Naive thymus-derived CD4-positive, alpha-beta T cell (primary cell): ENCODE measurements at regions of chr18 and their contacts with region 1.

Region 1: DNA sequence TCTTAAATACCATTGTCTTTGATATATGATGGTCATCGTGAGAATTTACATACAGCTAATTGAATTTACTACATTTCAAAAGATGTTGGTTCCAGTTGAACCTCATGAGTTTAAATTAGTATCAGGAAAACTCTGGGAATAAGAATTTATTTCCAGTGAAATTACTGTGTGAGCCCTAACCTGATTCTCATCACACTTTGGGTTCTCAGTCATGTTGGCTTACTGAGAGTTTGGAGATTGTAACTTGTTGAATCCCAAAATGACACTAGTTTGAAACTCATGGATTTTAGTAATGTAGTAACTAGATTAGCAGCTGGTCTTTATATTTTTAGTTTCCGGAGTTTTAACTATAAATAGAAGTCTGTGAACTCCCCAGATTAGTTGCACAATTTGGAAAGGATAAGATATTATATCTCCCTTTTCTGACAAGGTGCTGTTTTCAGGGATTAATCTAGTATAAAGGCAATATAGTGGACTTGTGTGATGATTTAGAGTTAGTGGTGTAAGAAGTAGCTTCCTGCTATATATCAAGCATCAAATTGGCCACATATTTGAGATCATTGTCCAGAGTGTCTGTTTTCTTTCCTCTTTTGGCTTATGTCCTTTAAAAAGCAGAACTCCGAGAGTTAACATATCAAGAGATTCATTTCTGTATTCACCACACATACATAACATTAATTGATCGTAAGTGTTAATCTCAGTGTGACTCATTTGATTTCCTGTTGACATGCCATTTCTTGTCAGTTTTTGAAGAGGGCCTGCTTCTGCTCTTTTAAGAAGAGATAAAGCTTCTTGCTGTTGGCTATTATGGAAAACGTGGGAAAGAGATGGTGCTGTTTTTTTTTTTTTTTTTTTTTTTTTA is 15.7 kb downstream of the NDUFV2 start:
- DNase-seq: peak in 7 of 9 donors; percentile 28 to 66 (median 43)
- ATAC-seq: peak; percentile 72
- H3K4me3 ChIP-seq: peak overlapping the region; percentile 32
- H3K4me3 Mint-ChIP-seq: peak overlapping the region; percentile 56 to 97 (median 82)
- H3K27ac ChIP-seq: peak overlapping the region; percentile 77
- H3K27ac Mint-ChIP-seq: peak overlapping the region; percentile 92 to 98 (median 96)
- H3K4me1 ChIP-seq: peaks cover 52 to 70% of the 10 kb centered on the region in 2 donors
- H3K4me1 Mint-ChIP-seq: peaks cover 51 to 95% (median 87%) of the 10 kb centered on the region in 7 donors
- H3K27me3 ChIP-seq: no peaks in the 10 kb centered on the region
- H3K27me3 Mint-ChIP-seq: no peaks in the 10 kb centered on the region

Region 2: GRCh38 chr18:8928044-8928443 is 190.2 kb before region 1 on chr18:
- CTCF ChIA-PET with region 1: no interaction called
- POLR2A ChIA-PET with region 1: no interaction called
- intact Hi-C with region 1: no loop called
- DNase-seq: no peak
- ATAC-seq: no peak
- H3K4me3 ChIP-seq: no peak overlapping the region
- H3K4me3 Mint-ChIP-seq: no peak overlapping the region
- H3K27ac ChIP-seq: no peak overlapping the region
- H3K27ac Mint-ChIP-seq: no peak overlapping the region
- H3K4me1 ChIP-seq: no peaks in the 10 kb centered on the region
- H3K4me1 Mint-ChIP-seq: no peaks in the 10 kb centered on the region
- H3K27me3 ChIP-seq: no peaks in the 10 kb centered on the region
- H3K27me3 Mint-ChIP-seq: peaks cover 0 to 24% (median 6%) of the 10 kb centered on the region in 5 donors

Region 3: DNA sequence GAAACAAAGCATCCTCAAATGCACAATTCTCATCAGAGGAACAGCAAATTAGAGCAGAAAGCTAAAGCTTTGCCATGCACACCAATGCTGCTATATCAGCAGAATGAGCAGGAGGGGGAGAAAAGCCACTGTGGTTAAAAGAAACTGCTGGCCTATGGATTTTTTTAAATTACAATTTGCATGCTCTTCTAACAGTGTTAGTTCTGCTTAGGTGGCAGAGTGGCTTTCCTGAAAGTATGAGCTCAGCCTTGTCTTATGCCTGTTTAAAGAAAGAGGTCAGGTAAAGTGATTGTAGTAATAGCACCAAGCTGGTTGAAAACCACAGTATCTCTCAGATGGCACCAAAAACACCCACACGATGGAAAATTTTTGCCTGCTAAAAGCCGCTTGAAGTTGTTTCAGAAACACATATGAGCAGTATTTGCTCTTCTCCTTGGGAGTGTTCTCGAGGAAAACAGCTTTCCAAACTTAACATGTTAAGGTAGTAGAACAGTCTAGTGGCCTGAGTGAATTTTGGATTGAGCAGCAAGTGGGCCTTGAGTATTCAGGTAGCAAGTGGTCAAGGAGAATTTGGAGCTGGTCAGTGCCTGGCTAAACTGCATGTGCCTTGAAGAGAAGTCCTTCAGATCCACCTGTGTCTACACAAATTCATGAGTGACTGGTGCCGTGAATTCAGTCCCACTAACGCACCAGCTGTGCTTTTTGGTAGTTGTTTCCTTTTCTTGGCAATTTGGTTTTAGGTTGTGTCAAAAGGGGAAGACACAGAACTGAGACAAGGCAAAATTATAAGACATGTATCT is 35.3 kb before region 1 on chr18:
- CTCF ChIA-PET with region 1: interaction called, 3 read pairs
- POLR2A ChIA-PET with region 1: interaction called, 23 read pairs
- intact Hi-C with region 1: loop called (anchors 1 to 2 kb)
- DNase-seq: peak in 8 of 9 donors; percentile 16 to 52 (median 34)
- ATAC-seq: peak; percentile 86
- H3K4me3 ChIP-seq: peak overlapping the region; percentile 18
- H3K4me3 Mint-ChIP-seq: peak overlapping the region; percentile 42 to 88 (median 72)
- H3K27ac ChIP-seq: peak overlapping the region; percentile 76
- H3K27ac Mint-ChIP-seq: peak overlapping the region; percentile 82 to 98 (median 94)
- H3K4me1 ChIP-seq: peaks cover 10 to 19% of the 10 kb centered on the region in 2 donors
- H3K4me1 Mint-ChIP-seq: peaks cover 19 to 51% (median 44%) of the 10 kb centered on the region in 7 donors
- H3K27me3 ChIP-seq: no peaks in the 10 kb centered on the region
- H3K27me3 Mint-ChIP-seq: no peaks in the 10 kb centered on the region

Region 4: DNA sequence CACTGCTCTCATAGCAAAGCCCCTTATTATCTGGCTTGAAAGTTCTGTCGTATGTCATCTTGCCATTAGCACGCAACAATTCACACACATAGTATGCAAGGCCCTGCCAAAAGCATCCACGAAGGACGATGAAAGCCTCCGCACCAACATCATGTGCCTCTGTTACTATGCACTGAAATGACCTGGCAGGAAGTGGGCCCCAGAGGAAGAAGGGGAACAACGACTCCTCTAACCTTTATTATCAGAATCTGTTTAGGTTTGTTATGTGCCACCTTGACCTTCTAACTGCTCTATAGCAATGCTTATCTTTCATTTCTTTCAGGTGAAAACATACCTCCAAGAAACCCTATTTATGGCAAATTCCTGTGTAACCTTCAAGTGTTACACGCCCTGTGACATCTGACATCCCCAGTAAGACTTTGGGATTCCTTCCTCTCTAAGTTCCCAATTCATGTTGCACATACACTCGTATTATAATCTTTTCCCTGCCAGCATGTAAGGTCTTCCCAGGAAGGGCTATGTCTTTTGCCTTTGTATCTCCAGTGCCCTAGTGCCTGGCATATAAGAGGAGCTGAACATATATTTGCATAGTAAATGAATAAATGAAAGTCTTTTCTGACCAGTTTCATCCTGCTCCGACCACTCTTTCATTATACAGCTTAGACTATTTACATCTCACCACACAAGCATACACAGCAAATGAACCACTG is 22.8 kb before region 1 on chr18:
- CTCF ChIA-PET with region 1: no interaction called
- POLR2A ChIA-PET with region 1: interaction called, 52 read pairs
- intact Hi-C with region 1: loop called in 1 of 2 experiments (anchors 1 kb)
- DNase-seq: peak in 8 of 9 donors; percentile 46 to 71 (median 58)
- ATAC-seq: peak; percentile 57
- H3K4me3 ChIP-seq: peak overlapping the region; percentile 26
- H3K4me3 Mint-ChIP-seq: peak overlapping the region; percentile 48 to 80 (median 70)
- H3K27ac ChIP-seq: peak overlapping the region; percentile 64
- H3K27ac Mint-ChIP-seq: peak overlapping the region; percentile 88 to 99 (median 92)
- H3K4me1 ChIP-seq: peaks cover 25 to 49% of the 10 kb centered on the region in 2 donors
- H3K4me1 Mint-ChIP-seq: peaks cover 34 to 68% (median 61%) of the 10 kb centered on the region in 7 donors
- H3K27me3 ChIP-seq: no peaks in the 10 kb centered on the region
- H3K27me3 Mint-ChIP-seq: no peaks in the 10 kb centered on the region

Region 5: GRCh38 chr18:9130806-9131205 is 12.6 kb after region 1 on chr18:
- CTCF ChIA-PET with region 1: interaction called, 9 read pairs
- POLR2A ChIA-PET with region 1: interaction called, 472 read pairs
- intact Hi-C with region 1: loop called (anchors 1 kb)
- DNase-seq: no peak
- ATAC-seq: no peak
- H3K4me3 ChIP-seq: no peak overlapping the region
- H3K4me3 Mint-ChIP-seq: no peak overlapping the region
- H3K27ac ChIP-seq: peak overlapping the region; percentile 34
- H3K27ac Mint-ChIP-seq: peak overlapping the region in 4 of 9 donors; percentile 16 to 83 (median 57)
- H3K4me1 ChIP-seq: peaks cover 10 to 19% of the 10 kb centered on the region in 2 donors
- H3K4me1 Mint-ChIP-seq: peaks cover 20 to 79% (median 66%) of the 10 kb centered on the region in 7 donors
- H3K27me3 ChIP-seq: no peaks in the 10 kb centered on the region
- H3K27me3 Mint-ChIP-seq: no peaks in the 10 kb centered on the region

Region 6: GRCh38 chr18:9147440-9148202 is 29.4 kb after region 1 on chr18:
- CTCF ChIA-PET with region 1: interaction called, 12 read pairs
- POLR2A ChIA-PET with region 1: interaction called, 472 read pairs
- intact Hi-C with region 1: loop called in 1 of 2 experiments (anchors 1 kb)
- DNase-seq: peak in 7 of 9 donors; percentile 35 to 66 (median 49)
- ATAC-seq: peak; percentile 81
- H3K4me3 ChIP-seq: no peak overlapping the region
- H3K4me3 Mint-ChIP-seq: peak overlapping the region in 9 of 10 donors; percentile 3 to 79 (median 42)
- H3K27ac ChIP-seq: peak overlapping the region; percentile 30
- H3K27ac Mint-ChIP-seq: peak overlapping the region; percentile 21 to 90 (median 66)
- H3K4me1 ChIP-seq: peaks cover 18 to 59% of the 10 kb centered on the region in 2 donors
- H3K4me1 Mint-ChIP-seq: peaks cover 54 to 93% (median 84%) of the 10 kb centered on the region in 7 donors
- H3K27me3 ChIP-seq: no peaks in the 10 kb centered on the region
- H3K27me3 Mint-ChIP-seq: no peaks in the 10 kb centered on the region